HCT116 (cell line): ENCODE measurements at regions of chr17 and their contacts with region 1.

Region 1: GRCh38 chr17:1516388-1517161 is at the start of gene INPP5K:
- DNase-seq: peak; percentile 94
- ATAC-seq: peak; percentile 96
- H3K4me3 ChIP-seq: peak within 1 kb of the TSS; percentile 91 to 95
- H3K27ac ChIP-seq: peak within 1 kb of the TSS; percentile 82
- H3K4me1 ChIP-seq: peaks cover 13 to 29% of the 10 kb centered on the region in 2 experiments
- H3K27me3 ChIP-seq: no peaks in the 10 kb centered on the region
- CTCF ChIP-seq: 0 out of 6 replicates have a peak, but pooled peaks of 1 of the 3 experiments have one; percentile 8
- POLR2A ChIP-seq: peak; percentile 62
- RAD21 ChIP-seq: no peak
- total RNA-seq, gene INPP5K: 25.6 TPM

Region 2: GRCh38 chr17:1260086-1260769 is 256.3 kb before region 1 on chr17:
- CTCF ChIA-PET with region 1: interaction called, 11 read pairs
- POLR2A ChIA-PET with region 1: no interaction called
- RAD21 ChIA-PET with region 1: no interaction called
- intact Hi-C with region 1: loop called (anchors 1 kb)
- DNase-seq: no peak
- ATAC-seq: no peak
- H3K4me3 ChIP-seq: peak overlapping the region; percentile 48 to 63
- H3K27ac ChIP-seq: peak overlapping the region; percentile 65
- H3K4me1 ChIP-seq: peaks cover 12 to 28% of the 10 kb centered on the region in 2 experiments
- H3K27me3 ChIP-seq: no peaks in the 10 kb centered on the region
- CTCF ChIP-seq: no peak
- POLR2A ChIP-seq: no peak
- RAD21 ChIP-seq: no peak

Region 3: GRCh38 chr17:1455797-1456599 is 60.6 kb before region 1 on chr17 and contains the start of gene CRK:
- CTCF ChIA-PET with region 1: no interaction called
- POLR2A ChIA-PET with region 1: no interaction called
- RAD21 ChIA-PET with region 1: no interaction called
- intact Hi-C with region 1: loop called (anchors 5 kb)
- DNase-seq: peak; percentile 85
- ATAC-seq: peak; percentile 89
- H3K4me3 ChIP-seq: peak within 1 kb of the TSS; percentile 85 to 92
- H3K27ac ChIP-seq: peak within 1 kb of the TSS; percentile 96
- H3K4me1 ChIP-seq: peaks cover 24 to 37% of the 10 kb centered on the region in 2 experiments
- H3K27me3 ChIP-seq: no peaks in the 10 kb centered on the region
- CTCF ChIP-seq: no peak
- POLR2A ChIP-seq: peak; percentile 82
- RAD21 ChIP-seq: no peak
- total RNA-seq, gene CRK: 55.5 TPM